ENCODE measurements at regions of chr19 and their contacts with region 1.

Region 1: GRCh38 chr19:44912854-44913253 is 1.6 kb upstream of the APOC1 start:
- DNase-seq: peak; percentile 72
- ATAC-seq: peak; percentile 16
- H3K4me3 ChIP-seq: peak overlapping the region in 1 of 3 experiments; percentile 77; a peak in 2 of 6 replicates
- H3K27ac ChIP-seq: peak overlapping the region; percentile 88
- H3K4me1 ChIP-seq: peaks cover 66% of the 10 kb centered on the region
- H3K27me3 ChIP-seq: no peaks in the 10 kb centered on the region
- CTCF ChIP-seq: no peak
- EP300 ChIP-seq: peak in 1 of 2 experiments; percentile 79; a peak in 2 of 4 replicates
- POLR2A ChIP-seq: 0 out of 4 replicates have a peak, but pooled peaks of 1 of the 2 experiments have one; percentile 31
- RAD21 ChIP-seq: peak; percentile 40

Region 2: DNA sequence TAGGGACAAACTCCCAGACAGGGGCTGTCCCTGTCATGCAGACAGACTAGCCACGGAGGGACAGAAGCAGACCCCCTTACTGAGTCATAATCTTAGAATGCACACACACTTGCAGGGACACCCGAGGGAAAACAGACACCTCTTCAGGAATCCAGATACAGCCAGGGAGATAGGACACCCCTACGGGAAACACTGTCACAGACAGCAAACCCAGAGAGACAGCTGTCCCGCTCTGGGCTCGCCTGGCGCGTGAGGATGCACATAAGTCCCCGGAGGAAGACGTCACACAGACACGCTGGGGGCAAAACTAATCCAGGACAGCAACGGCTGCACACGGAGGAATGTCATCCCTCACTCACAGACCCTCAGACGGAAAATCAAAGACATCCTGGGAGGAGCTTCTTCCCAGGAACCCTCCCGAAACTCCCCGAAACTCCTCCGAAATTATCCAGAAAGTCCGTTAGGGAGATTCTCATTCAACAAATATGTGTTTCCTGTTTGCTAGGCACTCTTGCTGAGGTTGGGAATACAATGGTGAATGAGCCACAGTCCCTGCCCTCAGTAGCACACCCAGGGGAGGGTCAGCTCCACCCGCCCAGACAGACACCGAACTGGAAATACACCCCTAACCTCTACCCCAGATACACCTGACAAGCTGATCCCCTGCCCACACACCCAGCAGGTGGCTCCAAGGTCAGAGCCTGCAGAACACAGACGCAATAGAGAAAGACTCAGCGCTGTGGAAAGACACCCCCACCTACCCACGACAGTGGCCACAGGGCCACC is 37.0 kb before region 1 on chr19:
- CTCF ChIA-PET with region 1: no interaction called
- POLR2A ChIA-PET with region 1: no interaction called
- in situ Hi-C with region 1: no loop called
- intact Hi-C with region 1: no loop called
- DNase-seq: no peak
- ATAC-seq: no peak
- H3K4me3 ChIP-seq: no peak overlapping the region
- H3K27ac ChIP-seq: no peak overlapping the region
- H3K4me1 ChIP-seq: peaks cover 20% of the 10 kb centered on the region
- H3K27me3 ChIP-seq: no peaks in the 10 kb centered on the region
- CTCF ChIP-seq: no peak
- EP300 ChIP-seq: no peak
- POLR2A ChIP-seq: no peak
- RAD21 ChIP-seq: no peak

Region 3: DNA sequence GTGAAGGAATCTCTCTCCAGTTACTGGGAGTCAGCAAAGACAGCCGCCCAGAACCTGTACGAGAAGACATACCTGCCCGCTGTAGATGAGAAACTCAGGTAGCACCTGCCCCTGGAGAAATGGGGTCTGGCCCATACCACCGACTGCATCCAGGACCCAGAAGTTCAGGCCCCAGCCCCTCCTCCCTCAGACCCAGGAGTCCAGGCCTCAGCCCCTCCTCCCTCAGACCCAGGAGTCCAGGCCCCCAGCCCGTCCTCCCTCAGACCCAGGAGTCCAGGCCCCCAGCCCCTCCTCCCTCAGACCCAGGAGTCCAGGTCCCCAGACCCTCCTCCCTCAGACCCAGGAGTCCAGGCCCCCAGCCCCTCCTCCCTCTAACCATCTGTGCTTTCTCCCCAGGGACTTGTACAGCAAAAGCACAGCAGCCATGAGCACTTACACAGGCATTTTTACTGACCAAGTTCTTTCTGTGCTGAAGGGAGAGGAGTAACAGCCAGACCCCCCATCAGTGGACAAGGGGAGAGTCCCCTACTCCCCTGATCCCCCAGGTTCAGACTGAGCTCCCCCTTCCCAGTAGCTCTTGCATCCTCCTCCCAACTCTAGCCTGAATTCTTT is 36.0 kb after region 1 on chr19:
- CTCF ChIA-PET with region 1: interaction called, 45 read pairs
- POLR2A ChIA-PET with region 1: interaction called, 55 read pairs
- in situ Hi-C with region 1: loop called (anchors 5 kb)
- intact Hi-C with region 1: loop called (anchors 1 kb)
- DNase-seq: no peak
- ATAC-seq: no peak
- H3K4me3 ChIP-seq: no peak overlapping the region
- H3K27ac ChIP-seq: peak overlapping the region; percentile 68
- H3K4me1 ChIP-seq: peaks cover 81% of the 10 kb centered on the region
- H3K27me3 ChIP-seq: no peaks in the 10 kb centered on the region; a peak in 1 of 5 replicates
- CTCF ChIP-seq: no peak
- EP300 ChIP-seq: no peak
- POLR2A ChIP-seq: no peak
- RAD21 ChIP-seq: no peak

Region 4: GRCh38 chr19:44968118-44968517 is 55.3 kb after region 1 on chr19:
- CTCF ChIA-PET with region 1: no interaction called
- POLR2A ChIA-PET with region 1: no interaction called
- in situ Hi-C with region 1: no loop called
- intact Hi-C with region 1: no loop called
- DNase-seq: no peak
- ATAC-seq: no peak
- H3K4me3 ChIP-seq: no peak overlapping the region
- H3K27ac ChIP-seq: no peak overlapping the region
- H3K4me1 ChIP-seq: no peaks in the 10 kb centered on the region
- H3K27me3 ChIP-seq: no peaks in the 10 kb centered on the region
- CTCF ChIP-seq: no peak
- EP300 ChIP-seq: no peak
- POLR2A ChIP-seq: no peak
- RAD21 ChIP-seq: no peak

Measured in HepG2 (cell line).